Mucosa of descending colon (tissue), 3 donors: ENCODE measurements at regions of chr5 and their contacts with region 1.

Region 1: GRCh38 chr5:157253547-157253946 is 12.4 kb upstream of the CYFIP2 start:
- DNase-seq: peak in 1 of 3 donors; percentile 72
- ATAC-seq: peak; percentile 77
- H3K4me3 ChIP-seq: no peak overlapping the region
- H3K4me1 ChIP-seq: peaks cover 4% of the 10 kb centered on the region
- CTCF ChIP-seq: peak; percentile 69

Region 2: GRCh38 chr5:156219483-156220005 is 1034.0 kb before region 1 on chr5:
- intact Hi-C with region 1: no loop called
- DNase-seq: no peak
- ATAC-seq: no peak
- H3K4me3 ChIP-seq: no peak overlapping the region
- H3K4me1 ChIP-seq: no peaks in the 10 kb centered on the region
- CTCF ChIP-seq: no peak

Region 3: DNA sequence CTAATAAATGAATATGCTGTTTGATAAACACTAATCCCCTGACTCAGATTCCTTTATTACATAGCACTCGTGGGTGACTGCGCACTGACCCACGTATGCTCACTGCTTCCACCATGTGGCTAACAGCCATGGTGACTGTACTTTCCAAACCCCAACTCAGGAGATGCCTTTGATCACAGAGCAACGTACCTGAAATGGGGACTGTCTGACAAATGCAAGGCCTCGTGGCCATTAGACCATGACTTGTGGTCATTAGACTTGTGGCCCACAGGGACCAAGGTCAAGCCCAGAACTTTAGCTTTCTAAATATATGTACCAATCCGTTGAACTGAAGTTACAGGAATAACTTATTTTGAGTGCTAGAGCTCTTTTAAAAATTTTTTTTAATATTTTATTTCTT is 58.9 kb after region 1 on chr5:
- intact Hi-C with region 1: loop called in 1 of 2 experiments (anchors 2 kb)
- DNase-seq: peak in 1 of 3 donors; percentile 67
- ATAC-seq: peak; percentile 86
- H3K4me3 ChIP-seq: no peak overlapping the region
- H3K4me1 ChIP-seq: no peaks in the 10 kb centered on the region
- CTCF ChIP-seq: peak; percentile 40